ENCODE measurements at regions of chr6 and their contacts with region 1.

Region 1: GRCh38 chr6:127855542-127856159 is 45.2 kb downstream of the THEMIS start:
- DNase-seq: peak; percentile 61
- H3K4me3 ChIP-seq: no peak overlapping the region
- H3K27ac ChIP-seq: no peak overlapping the region
- H3K4me1 ChIP-seq: no peaks in the 10 kb centered on the region
- H3K27me3 ChIP-seq: no peaks in the 10 kb centered on the region
- CTCF ChIP-seq: peak; percentile 18 to 45
- POLR2A ChIP-seq: no peak

Region 2: DNA sequence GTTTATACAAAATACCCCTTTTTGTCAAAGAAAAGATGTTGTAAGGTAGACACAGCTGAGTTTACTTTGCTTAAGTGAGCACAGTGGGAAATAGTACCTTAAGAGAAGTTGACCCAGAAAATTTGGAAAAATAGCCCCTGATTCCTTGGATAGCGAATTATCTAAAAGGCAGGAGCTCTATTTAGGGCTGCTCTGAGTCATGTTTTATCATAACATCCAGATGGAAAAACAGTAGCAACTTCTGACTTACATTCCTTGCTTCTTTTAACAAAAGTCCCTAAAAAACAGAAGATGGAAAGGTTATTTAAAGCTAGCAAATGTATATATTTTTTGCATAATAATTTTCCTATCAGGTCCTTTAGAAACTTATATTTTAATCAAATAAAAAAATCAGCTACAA is 13.8 kb before region 1 on chr6:
- CTCF ChIA-PET with region 1: interaction called, 20 read pairs
- POLR2A ChIA-PET with region 1: no interaction called
- dilution Hi-C with region 1: no loop called
- intact Hi-C with region 1: no loop called
- DNase-seq: no peak
- H3K4me3 ChIP-seq: no peak overlapping the region
- H3K27ac ChIP-seq: no peak overlapping the region
- H3K4me1 ChIP-seq: no peaks in the 10 kb centered on the region
- H3K27me3 ChIP-seq: peaks cover 0 to 5% of the 10 kb centered on the region in 2 experiments
- CTCF ChIP-seq: no peak
- POLR2A ChIP-seq: no peak

Region 3: GRCh38 chr6:128327890-128328289 is 472.2 kb after region 1 on chr6:
- CTCF ChIA-PET with region 1: interaction called, 52 read pairs
- POLR2A ChIA-PET with region 1: no interaction called
- dilution Hi-C with region 1: no loop called
- intact Hi-C with region 1: loop called (anchors 1 kb)
- DNase-seq: no peak
- H3K4me3 ChIP-seq: no peak overlapping the region
- H3K27ac ChIP-seq: no peak overlapping the region
- H3K4me1 ChIP-seq: no peaks in the 10 kb centered on the region
- H3K27me3 ChIP-seq: no peaks in the 10 kb centered on the region
- CTCF ChIP-seq: peak; percentile 35 to 37
- POLR2A ChIP-seq: no peak

Region 4: DNA sequence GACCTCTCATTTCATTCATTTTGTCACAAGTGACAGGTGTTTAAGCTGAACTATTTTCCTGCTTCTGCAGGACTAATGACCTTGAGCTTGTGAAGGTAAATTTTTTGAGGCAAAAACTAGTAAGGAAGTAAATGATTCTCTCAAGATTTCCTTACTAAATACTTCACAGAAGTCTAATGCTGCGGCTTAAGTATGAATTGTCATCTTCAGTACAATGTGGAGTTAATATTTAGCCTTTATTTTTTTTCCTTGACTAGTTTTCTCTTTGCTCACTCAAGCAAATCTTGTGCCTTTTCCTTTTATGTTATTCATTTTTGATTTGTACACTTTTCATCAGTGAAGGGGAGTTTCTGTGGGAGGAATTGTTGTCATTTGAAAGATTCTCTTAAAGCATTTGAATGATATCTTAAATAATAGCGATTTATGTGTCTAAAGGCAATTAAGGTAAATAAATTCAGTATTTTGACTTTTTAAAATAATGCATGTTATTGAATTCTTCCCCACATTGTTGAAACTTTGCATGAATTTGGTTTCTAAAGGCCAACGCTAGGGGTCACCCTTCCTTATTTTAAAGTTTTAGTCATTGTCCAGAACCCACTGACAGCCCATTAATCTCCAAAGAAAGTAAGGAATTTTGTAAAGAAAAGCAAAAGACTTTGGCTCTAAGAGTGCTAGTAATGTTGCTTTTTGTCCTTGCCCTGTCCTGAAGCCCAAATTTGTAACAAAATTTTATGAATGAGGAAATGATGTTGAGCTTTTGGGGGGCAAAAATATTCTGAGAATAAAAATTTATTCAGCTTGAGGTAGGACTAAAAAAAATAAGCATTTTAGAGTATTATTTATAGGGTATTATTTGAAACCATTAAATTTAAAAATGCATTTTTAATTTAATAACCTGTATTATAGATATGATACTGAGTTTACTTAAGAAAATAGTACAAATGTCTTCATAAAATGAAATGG is 869.9 kb after region 1 on chr6:
- CTCF ChIA-PET with region 1: interaction called, 99 read pairs
- POLR2A ChIA-PET with region 1: no interaction called
- dilution Hi-C with region 1: no loop called
- intact Hi-C with region 1: no loop called
- DNase-seq: peak; percentile 44
- H3K4me3 ChIP-seq: no peak overlapping the region
- H3K27ac ChIP-seq: no peak overlapping the region
- H3K4me1 ChIP-seq: no peaks in the 10 kb centered on the region
- H3K27me3 ChIP-seq: peaks cover 0 to 5% of the 10 kb centered on the region in 2 experiments
- CTCF ChIP-seq: peak; percentile 50 to 55
- POLR2A ChIP-seq: no peak

Region 5: GRCh38 chr6:128731249-128732165 is 875.9 kb after region 1 on chr6:
- CTCF ChIA-PET with region 1: interaction called, 99 read pairs
- POLR2A ChIA-PET with region 1: no interaction called
- dilution Hi-C with region 1: no loop called
- intact Hi-C with region 1: loop called (anchors 1 kb)
- DNase-seq: peak; percentile 69
- H3K4me3 ChIP-seq: no peak overlapping the region
- H3K27ac ChIP-seq: no peak overlapping the region
- H3K4me1 ChIP-seq: no peaks in the 10 kb centered on the region
- H3K27me3 ChIP-seq: peaks cover 0 to 5% of the 10 kb centered on the region in 2 experiments
- CTCF ChIP-seq: peak; percentile 51 to 68
- POLR2A ChIP-seq: no peak

Measured in endothelial cell of umbilical vein (primary cell).